ENCODE measurements at regions of chr2 and their contacts with region 1.

Region 1: DNA sequence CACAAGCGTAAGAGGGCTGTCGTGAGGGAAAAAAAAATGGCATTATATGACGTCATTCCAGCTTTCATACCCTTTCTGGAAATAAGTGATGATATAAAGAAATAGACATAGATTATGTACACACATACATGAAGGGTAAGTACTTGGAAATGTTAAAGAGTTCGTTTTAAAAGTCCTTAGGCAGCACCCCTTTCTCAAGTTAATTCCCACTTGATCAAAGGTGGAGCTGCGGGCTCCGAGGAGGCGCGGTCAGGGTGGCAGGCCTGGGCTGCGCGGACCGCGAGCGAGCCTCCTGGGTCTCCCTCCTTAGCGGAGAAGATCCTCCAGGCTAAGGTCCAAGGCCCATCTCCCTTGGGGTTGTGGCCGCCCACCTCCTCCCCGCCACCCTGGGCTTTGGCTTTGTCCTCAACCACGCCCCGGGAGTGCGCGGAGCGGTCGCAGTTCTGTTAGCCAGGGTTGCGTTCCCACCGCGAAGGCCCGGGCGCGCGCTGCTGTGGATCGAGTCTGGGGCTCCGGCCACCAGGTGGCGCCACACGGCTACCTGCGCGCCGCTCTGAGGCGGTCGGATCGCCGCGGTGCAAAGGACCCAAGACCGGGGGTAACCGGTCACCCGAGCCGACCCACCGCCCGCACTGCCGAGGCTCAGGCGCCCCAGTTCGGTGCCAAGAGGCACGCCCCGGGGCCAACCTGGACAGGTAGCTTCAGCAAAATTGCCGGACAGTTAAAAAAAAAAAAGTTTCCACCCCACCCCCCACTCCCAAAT is 66.8 kb downstream of the HNRNPLL start:
- DNase-seq: peak; percentile 37
- ATAC-seq: peak; percentile 96
- H3K4me3 ChIP-seq: peak overlapping the region; percentile 47 to 54
- H3K27ac ChIP-seq: no peak overlapping the region
- H3K4me1 ChIP-seq: peaks cover 14% of the 10 kb centered on the region in 2 experiments; a peak in 3 of 4 replicates
- H3K27me3 ChIP-seq: no peaks in the 10 kb centered on the region
- CTCF ChIP-seq: peak; percentile 81 to 84 (median 82)
- POLR2A ChIP-seq: no peak
- RAD21 ChIP-seq: peak; percentile 88

Region 2: DNA sequence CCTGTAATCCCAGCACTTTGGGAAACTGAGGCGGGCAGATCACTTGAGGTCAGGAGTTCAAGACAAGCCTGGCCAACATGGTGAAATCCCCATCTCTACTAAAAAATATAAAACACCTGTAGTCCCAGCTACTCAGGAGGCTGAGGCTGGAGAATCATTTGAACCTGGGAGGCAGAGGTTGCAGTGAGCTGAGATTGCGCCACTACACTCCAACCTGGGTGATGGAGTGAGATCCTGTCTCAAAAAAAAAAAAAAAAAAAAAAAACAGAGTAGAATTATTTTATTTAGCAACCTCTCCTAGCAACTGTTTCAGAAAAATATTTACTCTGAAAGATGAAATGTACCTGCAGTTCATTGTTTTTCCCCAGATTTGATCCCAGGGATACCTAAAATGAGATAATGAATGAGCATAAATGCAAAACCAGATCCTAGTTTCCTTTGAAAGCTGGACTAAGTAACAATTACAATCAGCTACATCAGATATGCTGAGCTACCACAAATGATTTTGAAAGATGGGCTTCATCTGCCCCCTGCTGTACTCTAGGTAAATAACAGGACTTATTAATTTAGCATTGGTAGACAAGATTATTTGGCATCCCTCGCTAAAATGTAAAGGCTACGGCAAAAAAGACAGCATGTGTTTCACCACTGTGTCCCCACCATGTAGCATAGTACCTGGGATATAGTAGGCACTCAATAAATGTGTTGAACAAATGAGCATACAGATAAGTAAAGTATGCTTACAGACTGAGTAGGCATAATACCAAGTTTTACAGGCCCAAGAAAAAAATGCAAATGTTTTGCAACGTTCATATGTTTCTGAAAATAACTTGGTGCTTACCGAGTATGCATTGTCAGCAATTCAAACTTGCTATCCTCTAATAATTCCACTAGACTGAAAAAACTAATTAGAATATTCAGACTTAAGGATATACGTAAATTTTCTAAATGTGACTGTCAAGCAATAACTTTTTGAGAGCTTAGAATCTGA is 261.3 kb before region 1 on chr2:
- CTCF ChIA-PET with region 1: no interaction called
- POLR2A ChIA-PET with region 1: no interaction called
- RAD21 ChIA-PET with region 1: no interaction called
- intact Hi-C with region 1: no loop called
- DNase-seq: peak; percentile 79
- ATAC-seq: peak; percentile 92
- H3K4me3 ChIP-seq: no peak overlapping the region
- H3K27ac ChIP-seq: no peak overlapping the region
- H3K4me1 ChIP-seq: no peaks in the 10 kb centered on the region
- H3K27me3 ChIP-seq: no peaks in the 10 kb centered on the region
- CTCF ChIP-seq: peak; percentile 37 to 78 (median 72); a peak in 5 of 6 replicates
- POLR2A ChIP-seq: no peak
- RAD21 ChIP-seq: peak; percentile 93

Region 3: DNA sequence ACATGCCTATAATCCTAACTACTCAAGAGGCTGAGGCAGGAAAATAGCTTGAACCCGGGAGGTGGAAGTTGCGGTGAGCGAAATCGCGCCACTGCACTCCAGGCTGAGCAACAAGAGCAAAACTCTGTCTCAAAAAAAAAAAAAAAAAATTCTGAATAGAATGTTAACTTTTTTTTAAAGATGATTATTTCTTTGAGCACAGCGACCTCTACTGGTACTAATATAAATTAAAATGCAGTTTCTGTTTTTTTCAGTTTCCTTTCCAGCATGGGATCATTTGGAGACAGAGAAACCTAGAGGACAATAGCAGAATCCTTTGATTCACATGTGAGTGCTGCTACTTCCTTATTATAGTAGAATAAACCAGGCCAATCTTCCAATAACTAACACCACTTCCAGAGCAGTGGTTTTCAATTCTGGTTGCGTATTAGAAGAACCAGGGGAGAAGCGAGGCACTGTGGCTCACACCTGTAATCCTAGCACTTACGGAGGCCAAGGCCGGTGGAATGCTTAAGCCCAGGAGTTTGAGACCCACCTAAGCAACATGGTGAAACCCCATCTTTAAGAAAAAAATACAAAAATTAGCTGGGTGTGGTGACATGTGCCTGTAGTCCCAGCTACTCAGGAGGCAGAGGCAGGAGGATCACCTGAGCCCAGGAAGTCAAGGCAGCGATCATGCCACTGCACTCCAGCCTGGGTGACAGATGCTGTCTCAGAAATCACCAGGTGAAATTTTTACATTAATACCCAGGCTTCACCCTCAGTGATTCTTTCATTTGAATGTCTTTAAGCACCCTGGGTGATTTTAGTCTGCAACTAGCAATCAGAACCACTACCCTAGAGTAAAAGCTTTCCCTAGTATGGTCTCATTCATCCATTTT is 205.2 kb after region 1 on chr2:
- CTCF ChIA-PET with region 1: no interaction called
- POLR2A ChIA-PET with region 1: no interaction called
- RAD21 ChIA-PET with region 1: no interaction called
- intact Hi-C with region 1: loop called (anchors 5 kb)
- DNase-seq: no peak
- ATAC-seq: peak; percentile 56
- H3K4me3 ChIP-seq: no peak overlapping the region
- H3K27ac ChIP-seq: 0 out of 2 replicates have a peak overlapping the region, but pooled peaks have one; percentile 0
- H3K4me1 ChIP-seq: no peaks in the 10 kb centered on the region
- H3K27me3 ChIP-seq: no peaks in the 10 kb centered on the region
- CTCF ChIP-seq: peak in 2 of 3 experiments; percentile 41 to 56; a peak in 3 of 6 replicates
- POLR2A ChIP-seq: no peak
- RAD21 ChIP-seq: peak; percentile 61

Region 4: DNA sequence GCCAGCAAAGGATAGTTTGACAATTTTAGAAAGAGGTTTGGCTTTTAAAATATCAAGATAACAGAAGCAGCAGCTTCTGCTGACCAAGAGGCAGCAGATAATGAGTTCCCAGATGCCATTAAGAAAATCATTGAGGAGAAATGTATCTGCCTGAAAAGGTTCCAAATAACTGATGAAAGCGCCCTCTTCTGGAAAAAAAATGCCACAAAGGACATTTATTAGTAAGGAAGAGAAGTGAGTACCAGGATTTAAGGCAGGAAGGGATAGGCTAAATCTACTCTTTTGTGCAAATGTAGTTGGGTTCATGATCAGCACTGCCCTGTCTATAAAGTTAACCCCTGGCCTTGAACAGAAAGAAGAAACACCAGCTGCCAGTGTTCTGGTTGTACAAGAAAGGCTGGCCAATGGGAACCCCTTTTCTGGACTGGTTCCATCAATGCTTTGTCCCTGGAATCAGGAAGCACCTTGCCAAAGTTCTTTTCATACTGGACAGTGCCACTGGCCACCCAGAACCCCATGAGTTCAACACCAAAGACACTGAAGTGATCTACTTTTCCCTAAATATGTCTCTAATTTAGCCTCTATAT is 299.2 kb after region 1 on chr2:
- CTCF ChIA-PET with region 1: no interaction called
- POLR2A ChIA-PET with region 1: no interaction called
- RAD21 ChIA-PET with region 1: no interaction called
- intact Hi-C with region 1: loop called (anchors 10 kb)
- DNase-seq: peak; percentile 19
- ATAC-seq: peak; percentile 64
- H3K4me3 ChIP-seq: no peak overlapping the region
- H3K27ac ChIP-seq: no peak overlapping the region
- H3K4me1 ChIP-seq: no peaks in the 10 kb centered on the region
- H3K27me3 ChIP-seq: no peaks in the 10 kb centered on the region
- CTCF ChIP-seq: peak; percentile 31 to 68 (median 52); a peak in 4 of 6 replicates
- POLR2A ChIP-seq: no peak
- RAD21 ChIP-seq: peak; percentile 52

Region 5: DNA sequence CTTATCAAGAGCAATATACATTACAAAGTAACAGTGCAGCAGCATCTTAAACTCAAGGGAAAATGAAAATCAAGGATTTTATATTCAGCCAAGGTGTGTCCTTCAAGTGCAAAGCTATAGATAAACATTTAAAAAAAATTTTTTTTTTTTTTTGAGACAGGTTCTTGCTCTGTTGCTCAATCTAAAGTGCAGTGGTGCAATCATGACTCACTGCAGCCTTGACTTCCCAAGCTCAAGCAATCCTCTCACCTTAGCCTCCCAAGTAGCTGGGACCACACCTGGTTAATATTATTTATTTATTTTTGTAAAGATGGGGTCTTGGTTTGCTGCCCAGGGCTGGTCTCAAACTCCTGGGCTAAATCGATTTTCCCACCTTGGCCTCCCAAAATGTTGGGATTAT is 698.8 kb after region 1 on chr2:
- CTCF ChIA-PET with region 1: no interaction called
- POLR2A ChIA-PET with region 1: no interaction called
- RAD21 ChIA-PET with region 1: no interaction called
- intact Hi-C with region 1: loop called (anchors 10 kb)
- DNase-seq: no peak
- ATAC-seq: no peak
- H3K4me3 ChIP-seq: no peak overlapping the region
- H3K27ac ChIP-seq: no peak overlapping the region
- H3K4me1 ChIP-seq: no peaks in the 10 kb centered on the region
- H3K27me3 ChIP-seq: no peaks in the 10 kb centered on the region
- CTCF ChIP-seq: no peak
- POLR2A ChIP-seq: no peak
- RAD21 ChIP-seq: no peak

Measured in HCT116 (cell line).